Heart right ventricle (tissue), 16 donors: ENCODE measurements at regions of chr12 and their contacts with region 1.

Region 1: GRCh38 chr12:106986625-106987430 is at the start of gene MTERF2:
- DNase-seq: peak; percentile 92 to 95
- ATAC-seq: peak; percentile 98 to 100 (median 99)
- H3K4me3 ChIP-seq: peak within 1 kb of the TSS; percentile 60 to 86 (median 72)
- H3K27ac ChIP-seq: peak within 1 kb of the TSS; percentile 76 to 93 (median 90)
- H3K4me1 ChIP-seq: peaks cover 4 to 30% (median 23%) of the 10 kb centered on the region in 9 donors
- H3K27me3 ChIP-seq: no peaks in the 10 kb centered on the region
- CTCF ChIP-seq: peak in 2 of 9 donors; percentile 11 to 24
- total RNA-seq, gene MTERF2: 18.1 to 42.4 (median 28.0) TPM

Region 2: DNA sequence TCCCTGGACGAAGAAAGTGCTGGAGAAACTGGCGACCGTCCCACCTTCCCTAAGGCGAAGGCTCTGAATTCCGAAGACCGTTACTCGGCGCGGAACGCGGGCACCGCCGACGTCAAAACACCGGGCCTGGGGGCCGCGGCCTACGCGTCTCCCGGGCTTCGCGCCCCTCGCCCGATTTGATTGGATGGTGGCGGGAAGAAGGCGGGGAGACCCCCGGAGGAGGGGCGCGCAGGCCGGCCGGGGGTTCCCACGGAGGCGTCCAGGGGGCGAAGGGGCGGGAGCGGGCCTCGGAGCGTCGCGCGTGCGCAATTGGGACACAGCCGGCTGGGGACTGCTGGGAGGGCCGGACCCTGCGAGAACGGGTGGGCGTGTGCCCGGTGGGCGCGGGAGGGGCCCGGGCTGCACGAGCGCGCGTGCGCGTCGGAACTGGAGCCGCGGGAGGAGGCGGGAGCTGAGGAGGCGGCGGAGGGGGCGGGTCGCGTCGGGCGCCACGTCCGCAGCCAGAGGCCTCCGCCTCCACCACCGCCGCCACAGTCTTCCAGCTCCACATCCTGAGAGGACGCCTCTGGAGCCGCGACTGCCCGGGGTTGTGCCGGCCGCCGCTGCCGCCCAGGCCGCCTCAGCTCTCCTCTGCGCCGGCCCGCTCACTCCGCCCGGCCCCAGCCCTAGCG is 31.3 kb before region 1 on chr12 and contains the start of gene TMEM263:
- intact Hi-C with region 1: loop called in 2 of 10 experiments (anchors 1 kb)
- DNase-seq: peak; percentile 95 to 98
- ATAC-seq: peak; percentile 91 to 97 (median 95)
- H3K4me3 ChIP-seq: peak within 1 kb of the TSS; percentile 78 to 98 (median 94)
- H3K27ac ChIP-seq: peak within 1 kb of the TSS; percentile 96 to 100 (median 98)
- H3K4me1 ChIP-seq: peaks cover 4 to 49% (median 32%) of the 10 kb centered on the region in 9 donors
- H3K27me3 ChIP-seq: peaks cover 0 to 19% (median 0%) of the 10 kb centered on the region in 7 donors
- CTCF ChIP-seq: peak in 1 of 9 donors; percentile 6
- total RNA-seq, gene TMEM263: 31.1 to 47.5 (median 37.0) TPM

Region 3: DNA sequence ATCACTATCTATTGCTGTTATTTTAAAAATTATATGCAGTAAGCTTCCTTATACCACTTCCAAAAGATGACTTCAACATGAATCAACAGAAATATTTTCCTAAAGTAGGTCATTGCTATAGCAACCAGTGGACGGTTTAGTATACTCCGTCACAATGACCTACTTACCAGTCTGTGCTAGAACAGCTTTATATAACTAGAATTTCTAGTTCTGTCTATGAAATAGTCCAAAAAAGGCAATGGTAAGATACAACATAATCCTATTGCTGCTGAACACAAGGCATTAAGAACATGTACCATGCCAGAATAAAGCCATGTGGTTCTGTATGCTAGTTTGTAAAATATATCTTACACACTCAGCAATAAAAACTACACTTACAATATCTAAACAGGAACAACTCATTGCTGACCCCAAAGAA is 40.8 kb after region 1 on chr12:
- intact Hi-C with region 1: loop called in 1 of 10 experiments (anchors 5 kb)
- DNase-seq: peak in 1 of 2 donors; percentile 16
- ATAC-seq: peak; percentile 87 to 98 (median 94)
- H3K4me3 ChIP-seq: peak overlapping the region in 1 of 10 donors; percentile 3
- H3K27ac ChIP-seq: peak overlapping the region; percentile 9 to 79 (median 46)
- H3K4me1 ChIP-seq: peaks cover 4 to 71% (median 46%) of the 10 kb centered on the region in 9 donors
- H3K27me3 ChIP-seq: no peaks in the 10 kb centered on the region
- CTCF ChIP-seq: no peak